ENCODE measurements at regions of chr2 and their contacts with region 1.

Region 1: DNA sequence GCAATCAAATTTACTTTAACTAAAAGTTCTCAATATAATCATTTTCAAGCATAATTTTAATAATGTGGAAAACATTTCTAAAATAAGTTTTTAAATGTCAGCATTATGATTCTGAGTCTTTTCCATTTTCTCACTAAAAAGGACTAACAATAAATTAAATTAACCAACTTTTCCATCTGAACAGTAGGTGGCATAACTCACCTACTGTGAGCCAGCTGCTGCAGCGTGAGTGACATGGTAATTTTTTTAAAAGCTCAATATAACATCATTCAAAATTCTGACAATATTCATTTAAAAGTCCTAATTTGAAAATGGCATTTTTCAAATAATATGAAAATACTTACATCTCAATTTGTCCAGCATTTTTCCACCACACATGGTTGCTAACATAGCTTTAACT is 66.5 kb downstream of the DTNB start:
- DNase-seq: peak; percentile 56
- ATAC-seq: no peak
- H3K4me3 ChIP-seq: no peak overlapping the region
- H3K4me3 Mint-ChIP-seq: no peak overlapping the region
- H3K27ac ChIP-seq: no peak overlapping the region
- H3K27ac Mint-ChIP-seq: no peak overlapping the region
- H3K4me1 ChIP-seq: peaks cover 16 to 22% of the 10 kb centered on the region in 2 donors
- H3K4me1 Mint-ChIP-seq: peaks cover 30% of the 10 kb centered on the region
- H3K27me3 ChIP-seq: no peaks in the 10 kb centered on the region
- H3K27me3 Mint-ChIP-seq: no peaks in the 10 kb centered on the region
- CTCF ChIP-seq: peak; percentile 84

Region 2: DNA sequence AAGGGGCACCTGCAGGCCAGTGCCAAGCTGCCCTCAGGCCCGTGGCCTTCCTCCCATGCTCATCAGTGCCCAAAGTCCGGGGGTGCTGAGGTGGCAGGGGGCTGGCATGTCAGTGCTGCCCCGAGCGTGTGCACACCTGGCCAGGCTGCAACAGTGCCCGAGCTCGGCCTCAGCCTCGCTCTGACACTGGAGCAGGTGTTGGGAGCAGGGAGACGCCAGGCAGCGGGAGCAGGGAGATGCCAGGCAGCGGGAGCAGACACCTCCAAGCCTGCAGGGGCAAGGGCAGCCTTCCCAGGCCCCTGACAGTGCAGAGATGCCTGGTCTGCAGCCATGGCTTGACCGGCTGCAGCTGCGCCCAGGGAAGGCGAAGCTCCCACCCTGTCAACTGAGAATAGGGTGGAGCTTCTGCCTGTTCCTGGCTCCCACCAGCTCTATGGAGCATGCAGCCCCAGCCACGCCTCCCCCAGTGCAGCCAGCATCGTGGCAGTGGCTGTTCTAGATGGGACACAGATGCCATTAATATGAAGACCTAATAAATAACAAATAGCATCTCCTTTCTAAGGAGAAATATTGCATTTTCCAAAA is 15.9 kb before region 1 on chr2:
- CTCF ChIA-PET with region 1: interaction called, 11 read pairs
- POLR2A ChIA-PET with region 1: no interaction called
- intact Hi-C with region 1: no loop called
- DNase-seq: no peak
- ATAC-seq: no peak
- H3K4me3 ChIP-seq: no peak overlapping the region
- H3K4me3 Mint-ChIP-seq: no peak overlapping the region
- H3K27ac ChIP-seq: no peak overlapping the region
- H3K27ac Mint-ChIP-seq: no peak overlapping the region
- H3K4me1 ChIP-seq: peaks cover 0 to 3% of the 10 kb centered on the region in 2 donors
- H3K4me1 Mint-ChIP-seq: peaks cover 8% of the 10 kb centered on the region
- H3K27me3 ChIP-seq: no peaks in the 10 kb centered on the region
- H3K27me3 Mint-ChIP-seq: no peaks in the 10 kb centered on the region
- CTCF ChIP-seq: no peak

Region 3: DNA sequence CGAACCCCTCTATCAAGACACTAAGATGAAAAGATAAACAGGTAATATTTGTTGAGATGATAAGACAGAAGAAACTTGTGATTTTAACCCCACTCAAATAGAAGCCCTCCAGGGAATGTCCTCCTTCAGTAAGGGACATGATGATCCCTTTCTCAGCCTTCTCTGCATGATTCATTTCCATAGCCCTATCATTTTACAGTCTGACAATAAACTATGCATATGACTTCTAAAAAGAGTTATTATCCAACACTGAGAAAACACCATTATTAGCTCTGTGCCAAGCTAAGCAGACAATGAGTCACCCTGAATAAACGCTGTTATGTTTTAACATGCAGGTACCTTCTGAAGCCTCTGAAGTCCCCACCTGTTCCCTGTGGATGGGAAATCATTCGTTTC is 11.7 kb after region 1 on chr2:
- CTCF ChIA-PET with region 1: interaction called, 22 read pairs
- POLR2A ChIA-PET with region 1: no interaction called
- intact Hi-C with region 1: no loop called
- DNase-seq: no peak
- ATAC-seq: no peak
- H3K4me3 ChIP-seq: no peak overlapping the region
- H3K4me3 Mint-ChIP-seq: no peak overlapping the region
- H3K27ac ChIP-seq: no peak overlapping the region
- H3K27ac Mint-ChIP-seq: no peak overlapping the region
- H3K4me1 ChIP-seq: no peaks in the 10 kb centered on the region
- H3K4me1 Mint-ChIP-seq: no peaks in the 10 kb centered on the region
- H3K27me3 ChIP-seq: no peaks in the 10 kb centered on the region
- H3K27me3 Mint-ChIP-seq: no peaks in the 10 kb centered on the region
- CTCF ChIP-seq: no peak

Region 4: GRCh38 chr2:25673300-25674076 is 66.6 kb after region 1 on chr2 and contains the start of gene DTNB:
- CTCF ChIA-PET with region 1: interaction called, 74 read pairs
- POLR2A ChIA-PET with region 1: no interaction called
- intact Hi-C with region 1: no loop called
- DNase-seq: peak; percentile 89
- ATAC-seq: peak; percentile 74
- H3K4me3 ChIP-seq: peak within 1 kb of the TSS; percentile 75 to 85 (median 82)
- H3K4me3 Mint-ChIP-seq: peak within 1 kb of the TSS; percentile 94
- H3K27ac ChIP-seq: peak within 1 kb of the TSS; percentile 59 to 71
- H3K27ac Mint-ChIP-seq: peak within 1 kb of the TSS; percentile 91
- H3K4me1 ChIP-seq: peaks cover 8 to 16% of the 10 kb centered on the region in 2 donors
- H3K4me1 Mint-ChIP-seq: peaks cover 16% of the 10 kb centered on the region
- H3K27me3 ChIP-seq: peaks cover 0 to 2% (median 0%) of the 10 kb centered on the region in 4 experiments
- H3K27me3 Mint-ChIP-seq: no peaks in the 10 kb centered on the region
- CTCF ChIP-seq: no peak
- total RNA-seq, gene DTNB: 37.3 and 45.8 TPM in 2 replicates

Region 5: DNA sequence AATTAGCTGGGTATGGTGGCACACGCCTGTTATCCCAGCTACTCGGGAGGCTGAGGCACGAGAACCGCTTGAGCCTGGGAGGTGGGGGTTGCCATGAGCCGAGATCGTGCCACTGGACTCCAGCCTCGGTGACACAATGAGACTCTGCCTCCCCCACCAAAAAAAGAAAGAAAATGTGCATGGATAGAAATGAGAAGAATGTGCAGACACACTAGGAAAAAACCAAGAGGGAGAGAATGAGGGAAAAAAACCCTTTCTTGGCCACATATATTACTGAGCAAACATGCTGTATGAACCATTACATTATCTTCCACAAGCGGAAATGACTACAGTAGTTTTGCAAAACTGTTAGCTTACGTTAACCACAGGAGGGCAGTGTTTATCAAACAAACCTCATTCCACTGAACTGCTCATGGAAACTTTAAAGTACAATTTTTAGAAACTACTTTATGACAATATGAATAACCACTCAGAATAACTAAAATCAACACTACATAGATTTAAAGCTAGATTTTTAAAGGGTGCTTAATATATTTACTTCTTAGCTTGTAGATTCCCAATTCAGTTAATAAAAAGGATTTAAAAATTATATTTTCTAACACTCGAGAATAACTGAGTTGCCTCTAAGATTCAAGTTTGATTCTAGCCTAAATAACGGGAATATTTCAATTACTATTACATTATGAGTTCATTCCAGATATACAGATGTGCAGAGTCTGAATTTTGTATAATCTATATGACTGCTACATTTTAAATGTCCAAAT is 245.0 kb after region 1 on chr2:
- CTCF ChIA-PET with region 1: interaction called, 10 read pairs
- POLR2A ChIA-PET with region 1: no interaction called
- intact Hi-C with region 1: loop called (anchors 5 kb)
- DNase-seq: peak; percentile 71
- ATAC-seq: peak; percentile 95
- H3K4me3 ChIP-seq: no peak overlapping the region
- H3K4me3 Mint-ChIP-seq: peak overlapping the region; percentile 40
- H3K27ac ChIP-seq: peak overlapping the region in 1 of 2 donors; percentile 45
- H3K27ac Mint-ChIP-seq: peak overlapping the region; percentile 39
- H3K4me1 ChIP-seq: peaks cover 11 to 14% of the 10 kb centered on the region in 2 donors
- H3K4me1 Mint-ChIP-seq: peaks cover 32% of the 10 kb centered on the region
- H3K27me3 ChIP-seq: no peaks in the 10 kb centered on the region
- H3K27me3 Mint-ChIP-seq: no peaks in the 10 kb centered on the region
- CTCF ChIP-seq: peak; percentile 83